SK-N-SH (cell line): ENCODE measurements at regions of chr1 and their contacts with region 1.

Region 1: GRCh38 chr1:60936163-60936562 is 146.2 kb upstream of the NFIA start:
- DNase-seq: no peak
- H3K4me3 ChIP-seq: no peak overlapping the region
- H3K27ac ChIP-seq: peak overlapping the region in 1 of 2 experiments; percentile 93; a peak in 3 of 4 replicates
- H3K4me1 ChIP-seq: peaks cover 7 to 25% of the 10 kb centered on the region in 2 experiments; a peak in 3 of 4 replicates
- H3K27me3 ChIP-seq: no peaks in the 10 kb centered on the region
- CTCF ChIP-seq: no peak
- EP300 ChIP-seq: peak in 1 of 2 experiments; percentile 53; a peak in 1 of 4 replicates
- RAD21 ChIP-seq: peak; percentile 11; the same call in 1 of the 2 replicates

Region 2: GRCh38 chr1:60947367-60947766 is 11.2 kb after region 1 on chr1:
- CTCF ChIA-PET with region 1: interaction called, 10 read pairs
- POLR2A ChIA-PET with region 1: no interaction called
- DNase-seq: no peak
- H3K4me3 ChIP-seq: no peak overlapping the region
- H3K27ac ChIP-seq: no peak overlapping the region; a peak in 1 of 4 replicates
- H3K4me1 ChIP-seq: peaks cover 6 to 29% of the 10 kb centered on the region in 2 experiments; a peak in 2 of 4 replicates
- H3K27me3 ChIP-seq: no peaks in the 10 kb centered on the region
- CTCF ChIP-seq: no peak
- EP300 ChIP-seq: no peak
- RAD21 ChIP-seq: no peak